ENCODE measurements at regions of chr11 and their contacts with region 1.

Region 1: GRCh38 chr11:133984828-133985227 is 28.1 kb upstream of the IGSF9B start:
- DNase-seq: no peak

Region 2: GRCh38 chr11:133895061-133895479 is 89.8 kb before region 1 on chr11:
- intact Hi-C with region 1: no loop called
- DNase-seq: no peak

Region 3: DNA sequence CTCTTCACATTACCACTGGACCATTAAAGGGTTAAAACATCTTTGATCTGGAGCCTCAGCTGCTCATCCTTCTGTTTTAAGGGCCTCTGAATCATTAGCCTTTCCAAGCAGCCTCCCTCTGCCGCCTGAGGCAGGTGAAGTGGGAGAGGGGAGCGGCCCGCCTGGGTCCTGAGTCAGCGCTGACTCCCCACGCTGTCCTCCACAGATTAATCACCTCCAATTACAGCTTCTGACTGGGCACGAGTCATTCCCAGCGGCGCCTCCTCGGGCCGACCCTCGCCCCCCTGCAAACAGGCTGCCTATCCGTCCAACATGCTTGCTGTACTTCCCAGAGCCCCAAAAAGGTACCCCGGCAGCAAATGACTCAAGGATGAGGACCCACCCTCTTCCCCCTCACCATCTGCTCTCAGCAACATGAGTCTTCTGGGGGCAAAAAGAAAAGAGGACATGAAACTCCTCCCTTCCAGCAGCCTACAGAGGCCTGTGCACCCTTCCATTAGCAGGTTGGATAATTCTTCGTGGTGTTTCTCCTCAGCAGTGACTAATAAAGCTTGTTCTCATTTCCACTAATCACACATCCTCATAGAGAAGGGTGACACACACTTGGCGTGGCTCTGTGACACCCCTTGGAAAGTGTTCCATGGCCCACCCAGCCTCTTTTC is 39.7 kb after region 1 on chr11:
- intact Hi-C with region 1: loop called in 1 of 2 experiments (anchors 1 kb)
- DNase-seq: no peak